Activated naive CD4-positive, alpha-beta T cell treated with anti-CD3 and anti-CD28 coated beads for 36 hours (primary cell): ENCODE measurements at regions of chr1 and their contacts with region 1.

Region 1: GRCh38 chr1:207321079-207321789 is at the start of gene CD55:
- DNase-seq: peak; percentile 99
- H3K4me3 Mint-ChIP-seq: peak within 1 kb of the TSS; percentile 96
- H3K27ac Mint-ChIP-seq: peak within 1 kb of the TSS; percentile 98
- H3K4me1 Mint-ChIP-seq: peaks cover 34% of the 10 kb centered on the region
- H3K27me3 Mint-ChIP-seq: no peaks in the 10 kb centered on the region
- total RNA-seq, gene CD55: 62.1 to 66.0 TPM

Region 2: GRCh38 chr1:207052911-207053769 is 268.1 kb before region 1 on chr1 and contains the start of gene PFKFB2:
- CTCF ChIA-PET with region 1: interaction called, 6 read pairs
- intact Hi-C with region 1: loop called (anchors 1 kb)
- DNase-seq: peak; percentile 97
- H3K4me3 Mint-ChIP-seq: peak within 1 kb of the TSS; percentile 97
- H3K27ac Mint-ChIP-seq: peak within 1 kb of the TSS; percentile 68
- H3K4me1 Mint-ChIP-seq: peaks cover 36% of the 10 kb centered on the region
- H3K27me3 Mint-ChIP-seq: no peaks in the 10 kb centered on the region
- total RNA-seq, gene PFKFB2: 3.4 to 6.2 TPM

Region 3: DNA sequence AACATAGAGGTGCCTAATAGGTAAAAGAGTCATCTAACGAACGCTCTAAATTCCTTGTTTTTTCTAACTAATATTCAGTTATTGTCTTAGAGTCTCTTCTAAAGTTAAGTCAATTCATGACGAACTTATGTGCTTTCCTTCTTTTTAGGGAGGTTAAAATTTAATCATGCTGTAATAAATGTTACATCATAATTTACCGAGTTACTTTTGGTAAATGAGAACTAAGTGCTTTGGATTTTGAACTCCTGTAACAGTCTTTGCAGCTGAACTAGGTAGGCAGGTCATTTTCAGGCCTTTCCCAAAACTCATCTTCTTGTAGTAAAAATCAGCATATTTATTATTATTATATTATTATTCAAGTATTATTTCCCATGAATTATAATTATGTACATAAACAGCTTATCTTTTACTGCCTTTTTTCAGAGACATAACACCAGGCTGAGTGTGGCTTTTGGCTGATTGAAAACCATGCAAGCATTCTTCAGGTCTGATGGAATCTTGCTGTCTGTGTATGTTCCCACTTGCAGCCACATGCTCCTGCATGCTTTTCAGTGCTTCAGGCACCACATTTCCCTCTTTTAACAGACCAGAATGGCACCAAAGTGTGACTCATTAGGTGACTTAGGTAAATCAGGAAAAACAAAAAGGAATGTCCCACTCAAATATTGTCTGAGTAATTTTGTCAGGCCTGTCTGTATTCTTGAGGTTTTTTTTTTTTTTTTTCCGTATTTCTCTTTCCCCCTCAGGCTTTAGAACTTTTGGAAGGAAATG is 80.7 kb before region 1 on chr1:
- CTCF ChIA-PET with region 1: no interaction called
- intact Hi-C with region 1: no loop called
- DNase-seq: no peak
- H3K4me3 Mint-ChIP-seq: no peak overlapping the region
- H3K27ac Mint-ChIP-seq: no peak overlapping the region
- H3K4me1 Mint-ChIP-seq: peaks cover 4% of the 10 kb centered on the region
- H3K27me3 Mint-ChIP-seq: no peaks in the 10 kb centered on the region

Region 4: GRCh38 chr1:207336559-207337467 is 15.6 kb after region 1 on chr1:
- CTCF ChIA-PET with region 1: interaction called, 9 read pairs
- intact Hi-C with region 1: loop called (anchors 1 kb)
- DNase-seq: peak; percentile 43
- H3K4me3 Mint-ChIP-seq: no peak overlapping the region
- H3K27ac Mint-ChIP-seq: peak overlapping the region; percentile 82
- H3K4me1 Mint-ChIP-seq: peaks cover 68% of the 10 kb centered on the region
- H3K27me3 Mint-ChIP-seq: no peaks in the 10 kb centered on the region

Region 5: DNA sequence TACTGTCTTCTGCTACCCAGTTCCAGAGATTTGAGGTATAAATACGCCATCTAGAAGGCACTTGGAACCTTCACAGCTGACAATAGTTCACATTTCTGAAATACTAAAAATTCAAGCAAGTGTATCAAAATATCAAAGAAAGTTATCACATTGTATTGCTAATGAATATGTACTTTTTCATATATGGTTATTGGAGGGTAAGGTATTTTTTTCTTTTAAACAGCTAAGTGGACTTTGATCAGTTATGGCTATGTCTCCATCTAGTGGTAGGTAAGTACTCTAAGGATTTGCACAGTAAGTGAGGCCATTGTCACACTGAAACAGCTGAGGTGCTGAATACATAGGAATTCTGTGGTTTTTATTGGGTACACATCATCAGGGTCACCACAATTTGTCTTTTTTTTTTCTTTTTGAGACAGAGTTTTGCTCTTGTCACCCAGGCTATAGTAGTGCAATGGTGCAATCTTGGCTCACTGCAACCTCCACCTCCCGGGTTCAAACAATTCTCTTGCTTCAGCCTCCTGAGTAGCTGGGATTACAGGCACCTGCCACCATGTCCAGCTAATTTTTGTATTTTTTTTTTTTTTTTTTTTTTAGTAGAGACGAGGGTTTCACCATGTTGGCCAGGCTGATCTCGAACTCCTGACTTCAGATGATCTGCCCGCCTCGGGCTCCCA is 83.8 kb after region 1 on chr1:
- CTCF ChIA-PET with region 1: interaction called, 4 read pairs
- intact Hi-C with region 1: loop called (anchors 1 kb)
- DNase-seq: no peak
- H3K4me3 Mint-ChIP-seq: no peak overlapping the region
- H3K27ac Mint-ChIP-seq: no peak overlapping the region
- H3K4me1 Mint-ChIP-seq: peaks cover 13% of the 10 kb centered on the region
- H3K27me3 Mint-ChIP-seq: no peaks in the 10 kb centered on the region

Region 6: GRCh38 chr1:207751790-207752455 is 430.7 kb after region 1 on chr1 and contains the start of gene CD46:
- CTCF ChIA-PET with region 1: no interaction called
- intact Hi-C with region 1: loop called (anchors 10 kb)
- DNase-seq: peak; percentile 97
- H3K4me3 Mint-ChIP-seq: peak within 1 kb of the TSS; percentile 92
- H3K27ac Mint-ChIP-seq: peak within 1 kb of the TSS; percentile 98
- H3K4me1 Mint-ChIP-seq: peaks cover 59% of the 10 kb centered on the region
- H3K27me3 Mint-ChIP-seq: no peaks in the 10 kb centered on the region
- total RNA-seq, gene CD46: 91.0 to 93.4 TPM